Head of caudate nucleus (tissue), 42 donors: ENCODE measurements at regions of chr10 and their contacts with region 1.

Region 1: GRCh38 chr10:112721080-112721698 is 228.9 kb upstream of the TCF7L2 start:
- DNase-seq: peak in 14 of 42 donors; percentile 8 to 76 (median 22)

Region 2: DNA sequence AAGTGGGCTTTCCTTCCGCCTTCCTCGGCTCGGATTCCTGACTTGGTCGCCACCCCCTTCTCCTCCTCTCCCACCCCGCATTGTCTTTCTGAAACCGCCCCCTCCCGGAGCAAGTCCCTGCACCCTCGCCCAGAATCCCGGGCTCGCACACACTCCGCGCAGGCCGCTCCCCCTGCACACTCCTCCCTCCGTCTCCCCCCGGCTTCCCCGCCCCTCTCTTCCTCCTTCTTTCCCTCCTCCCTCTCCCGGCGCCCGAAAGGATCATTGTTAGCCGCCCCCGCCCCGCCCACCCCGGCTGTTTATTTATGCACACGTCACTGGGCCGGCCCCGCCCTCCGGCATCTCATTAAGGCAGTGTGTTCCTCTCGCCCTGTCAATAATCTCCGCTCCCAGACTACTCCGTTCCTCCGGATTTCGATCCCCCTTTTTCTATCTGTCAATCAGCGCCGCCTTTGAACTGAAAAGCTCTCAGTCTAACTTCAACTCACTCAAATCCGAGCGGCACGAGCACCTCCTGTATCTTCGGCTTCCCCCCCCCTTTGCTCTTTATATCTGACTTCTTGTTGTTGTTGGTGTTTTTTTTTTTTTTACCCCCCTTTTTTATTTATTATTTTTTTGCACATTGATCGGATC is 228.8 kb after region 1 on chr10 and contains the start of gene TCF7L2:
- intact Hi-C with region 1: loop called (anchors 10 kb)
- DNase-seq: peak; percentile 82 to 98 (median 94)

Region 3: GRCh38 chr10:113126229-113127201 is 405.3 kb after region 1 on chr10:
- intact Hi-C with region 1: loop called (anchors 10 kb)
- DNase-seq: peak; percentile 34 to 89 (median 78)